ENCODE measurements at regions of chr6 and their contacts with region 1.

Region 1: GRCh38 chr6:117440558-117441525 is 15.1 kb upstream of the ROS1 start:
- DNase-seq: peak; percentile 98
- H3K4me3 ChIP-seq: peak overlapping the region in 2 of 3 experiments; percentile 7 to 25
- H3K27ac ChIP-seq: peak overlapping the region; percentile 99
- H3K4me1 ChIP-seq: peaks cover 42% of the 10 kb centered on the region
- H3K27me3 ChIP-seq: no peaks in the 10 kb centered on the region
- CTCF ChIP-seq: no peak

Region 2: GRCh38 chr6:117487821-117488220 is 47.0 kb after region 1 on chr6:
- CTCF ChIA-PET with region 1: no interaction called
- dilution Hi-C with region 1: loop called (anchors 5 kb)
- in situ Hi-C with region 1: no loop called
- intact Hi-C with region 1: no loop called
- DNase-seq: no peak
- H3K4me3 ChIP-seq: no peak overlapping the region
- H3K27ac ChIP-seq: no peak overlapping the region
- H3K4me1 ChIP-seq: peaks cover 20% of the 10 kb centered on the region
- H3K27me3 ChIP-seq: no peaks in the 10 kb centered on the region
- CTCF ChIP-seq: no peak

Region 3: DNA sequence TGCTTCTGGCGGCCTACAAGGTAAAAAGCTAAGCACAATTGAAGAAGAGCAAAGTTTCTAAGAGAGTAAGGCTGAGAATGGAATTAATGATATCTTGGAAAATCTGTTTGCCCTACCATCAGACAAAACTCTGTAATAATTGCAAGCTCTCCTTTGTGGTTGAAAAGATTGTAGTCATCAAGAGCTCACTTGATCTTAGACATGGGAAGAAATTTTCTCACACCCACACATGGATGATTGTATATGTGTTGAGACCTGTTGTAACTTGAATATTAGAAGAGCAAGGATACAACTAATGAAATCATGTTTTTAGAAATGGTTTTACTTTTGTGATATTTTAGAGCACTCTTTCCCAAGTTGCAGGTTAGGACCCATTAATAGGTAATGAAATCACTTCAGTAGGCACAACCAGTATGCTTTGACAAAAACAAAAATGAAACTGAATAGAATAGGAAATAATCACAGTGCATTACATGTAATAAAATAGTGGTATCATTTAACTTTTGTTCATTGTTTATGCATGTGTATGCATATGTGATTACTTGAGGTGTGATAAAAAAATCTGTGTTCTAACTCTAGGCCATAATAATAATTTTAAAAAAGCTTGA is 55.6 kb after region 1 on chr6:
- CTCF ChIA-PET with region 1: no interaction called
- dilution Hi-C with region 1: no loop called
- in situ Hi-C with region 1: no loop called
- intact Hi-C with region 1: loop called (anchors 2 kb)
- DNase-seq: peak; percentile 96
- H3K4me3 ChIP-seq: peak overlapping the region in 2 of 3 experiments; percentile 9 to 28
- H3K27ac ChIP-seq: peak overlapping the region; percentile 95
- H3K4me1 ChIP-seq: peaks cover 57% of the 10 kb centered on the region
- H3K27me3 ChIP-seq: no peaks in the 10 kb centered on the region
- CTCF ChIP-seq: no peak

Region 4: DNA sequence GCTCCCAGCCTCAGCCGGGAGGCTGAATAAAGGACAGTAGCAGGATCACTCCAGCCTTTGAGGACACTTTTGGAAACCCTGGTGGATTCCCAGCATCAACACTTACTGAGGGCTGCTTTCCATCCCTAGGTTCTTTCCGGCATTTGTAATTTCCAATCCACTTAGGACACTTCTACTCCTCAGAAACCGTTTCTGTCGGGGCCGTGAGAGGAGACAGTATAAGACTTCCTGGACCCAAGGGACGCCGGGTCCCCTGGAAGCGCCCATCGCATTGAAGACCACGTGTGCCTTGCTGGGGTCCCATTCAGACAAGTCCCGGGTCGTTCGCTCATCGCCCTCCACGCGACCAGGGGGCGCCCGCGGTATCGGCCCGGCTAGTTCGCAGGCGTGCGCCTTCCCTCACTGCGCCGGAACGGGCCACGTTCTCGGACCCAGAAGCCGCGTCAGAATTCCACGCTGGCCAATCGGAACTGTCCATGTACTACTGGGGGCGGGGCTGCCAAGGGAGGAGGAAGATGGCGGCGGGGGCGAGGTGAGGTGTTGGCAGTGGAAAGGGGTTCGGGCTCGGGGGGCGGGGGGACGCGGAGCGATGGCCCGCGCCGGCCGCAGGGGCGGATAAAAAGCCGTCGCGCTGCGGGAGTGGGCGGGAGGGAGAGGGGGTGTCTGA is 234.3 kb after region 1 on chr6 and contains the start of gene NUS1:
- CTCF ChIA-PET with region 1: no interaction called
- dilution Hi-C with region 1: no loop called
- in situ Hi-C with region 1: no loop called
- intact Hi-C with region 1: loop called (anchors 2 kb)
- DNase-seq: peak; percentile 96
- H3K4me3 ChIP-seq: peak within 1 kb of the TSS; percentile 75 to 82 (median 80)
- H3K27ac ChIP-seq: peak within 1 kb of the TSS; percentile 50
- H3K4me1 ChIP-seq: peaks cover 21% of the 10 kb centered on the region
- H3K27me3 ChIP-seq: no peaks in the 10 kb centered on the region
- CTCF ChIP-seq: peak; percentile 64 to 86
- total RNA-seq, gene NUS1: 17.7 to 38.7 TPM

Measured in mammary epithelial cell (primary cell).